WTC11 (cell line): ENCODE measurements at regions of chr9 and their contacts with region 1.

Region 1: DNA sequence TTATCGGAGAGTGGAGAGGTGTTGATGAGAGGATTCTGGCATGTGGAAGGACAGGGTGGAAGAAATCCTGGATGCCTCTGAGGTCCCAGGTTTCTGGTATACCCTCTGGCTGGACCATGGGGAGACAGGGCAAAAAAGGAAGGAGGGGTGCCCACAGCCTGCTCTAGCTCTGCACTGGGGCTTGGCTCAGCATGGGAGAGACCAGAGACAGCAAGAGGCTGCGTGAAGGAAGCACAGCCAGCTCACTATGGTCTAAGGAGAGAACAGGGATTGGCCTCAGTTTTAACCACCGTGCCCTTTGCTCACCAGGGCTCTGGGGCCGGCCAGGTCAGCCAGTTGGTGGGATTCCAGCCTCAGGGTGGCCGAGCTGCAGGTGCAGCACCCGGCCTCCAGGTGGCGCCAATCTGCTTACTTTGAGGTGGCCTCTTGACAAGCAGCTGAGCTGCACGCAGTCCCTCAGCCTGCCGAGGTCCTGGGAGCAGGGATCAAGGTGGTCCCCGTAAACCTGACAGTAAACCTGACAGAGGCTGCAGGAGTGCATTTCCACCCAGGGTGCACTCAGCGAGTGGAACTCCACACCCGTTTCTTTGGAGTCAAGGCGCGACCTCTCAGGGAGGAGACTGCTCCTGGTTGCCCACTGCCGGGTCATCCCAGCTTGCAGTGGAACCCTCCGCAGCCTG is 25.0 kb upstream of the SPTLC1 start:
- DNase-seq: peak; percentile 95
- ATAC-seq: peak; percentile 60
- H3K4me3 Mint-ChIP-seq: peak overlapping the region; percentile 74; the same call in 1 of the 2 replicates
- H3K27ac Mint-ChIP-seq: no peak overlapping the region
- H3K4me1 Mint-ChIP-seq: peaks cover 5% of the 10 kb centered on the region; the same call in 1 of the 2 replicates
- H3K27me3 Mint-ChIP-seq: peaks cover 36% of the 10 kb centered on the region
- CTCF ChIP-seq: peak; percentile 98

Region 2: DNA sequence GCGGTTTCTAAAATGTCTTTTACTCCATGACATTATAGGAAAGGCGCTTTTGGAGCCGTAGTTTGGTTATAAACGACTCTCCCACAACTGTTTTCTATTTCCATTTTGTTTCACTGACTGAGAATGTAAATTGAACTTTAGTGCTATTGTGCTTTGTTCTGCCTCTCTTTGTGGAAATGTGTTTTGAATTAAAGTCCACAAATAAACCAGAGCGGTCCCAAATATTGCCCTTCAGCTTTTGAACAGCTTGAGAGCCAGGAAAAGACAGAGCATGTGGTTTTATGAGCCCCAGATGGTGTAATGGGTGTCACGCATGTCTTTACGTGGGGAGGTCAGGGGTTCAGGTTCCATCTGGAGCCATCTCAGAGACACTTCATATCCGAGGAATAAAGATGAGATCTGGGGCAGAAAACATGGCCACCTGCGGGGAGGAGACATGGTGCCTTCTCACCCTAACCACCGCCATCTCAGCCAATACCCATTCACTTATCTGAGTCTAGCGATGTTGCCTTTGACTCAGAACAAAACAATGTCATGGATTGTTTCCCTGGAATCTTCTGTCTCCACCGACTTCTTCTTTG is 147.7 kb before region 1 on chr9:
- CTCF ChIA-PET with region 1: no interaction called
- POLR2A ChIA-PET with region 1: no interaction called
- DNase-seq: no peak
- ATAC-seq: no peak
- H3K4me3 Mint-ChIP-seq: no peak overlapping the region
- H3K27ac Mint-ChIP-seq: no peak overlapping the region
- H3K4me1 Mint-ChIP-seq: no peaks in the 10 kb centered on the region
- H3K27me3 Mint-ChIP-seq: peaks cover 4% of the 10 kb centered on the region; the same call in 1 of the 2 replicates
- CTCF ChIP-seq: no peak

Region 3: GRCh38 chr9:92044936-92045335 is 95.3 kb before region 1 on chr9:
- CTCF ChIA-PET with region 1: no interaction called
- POLR2A ChIA-PET with region 1: no interaction called
- DNase-seq: no peak
- ATAC-seq: no peak
- H3K4me3 Mint-ChIP-seq: no peak overlapping the region
- H3K27ac Mint-ChIP-seq: no peak overlapping the region
- H3K4me1 Mint-ChIP-seq: peaks cover 23% of the 10 kb centered on the region
- H3K27me3 Mint-ChIP-seq: no peaks in the 10 kb centered on the region
- CTCF ChIP-seq: no peak

Region 4: DNA sequence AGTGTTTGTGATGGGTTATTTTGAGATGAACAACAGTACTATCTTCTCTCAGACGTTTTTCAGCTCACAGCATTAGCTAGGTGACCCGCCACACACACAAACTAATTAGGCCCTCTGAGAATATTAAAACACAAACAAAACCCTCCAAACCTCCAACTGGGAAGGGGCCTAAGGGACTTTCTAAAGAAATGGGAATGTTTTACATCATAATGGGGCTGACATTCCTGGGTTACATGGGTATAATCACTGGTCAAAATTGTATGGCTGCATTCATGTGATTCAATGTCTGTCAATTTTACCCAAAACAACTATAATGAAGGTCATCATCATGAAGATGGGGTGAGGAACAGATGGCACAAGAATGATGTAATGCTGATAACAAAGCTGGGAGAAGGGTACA is 84.6 kb before region 1 on chr9:
- CTCF ChIA-PET with region 1: no interaction called
- POLR2A ChIA-PET with region 1: no interaction called
- DNase-seq: no peak
- ATAC-seq: peak; percentile 81
- H3K4me3 Mint-ChIP-seq: peak overlapping the region; percentile 30
- H3K27ac Mint-ChIP-seq: peak overlapping the region; percentile 96
- H3K4me1 Mint-ChIP-seq: peaks cover 69% of the 10 kb centered on the region
- H3K27me3 Mint-ChIP-seq: no peaks in the 10 kb centered on the region
- CTCF ChIP-seq: no peak

Region 5: GRCh38 chr9:92180669-92181181 is 40.5 kb after region 1 on chr9:
- CTCF ChIA-PET with region 1: interaction called, 67 read pairs
- POLR2A ChIA-PET with region 1: no interaction called
- DNase-seq: no peak
- ATAC-seq: no peak
- H3K4me3 Mint-ChIP-seq: no peak overlapping the region
- H3K27ac Mint-ChIP-seq: no peak overlapping the region; the same call in 1 of the 2 replicates
- H3K4me1 Mint-ChIP-seq: no peaks in the 10 kb centered on the region
- H3K27me3 Mint-ChIP-seq: no peaks in the 10 kb centered on the region
- CTCF ChIP-seq: no peak

Region 6: DNA sequence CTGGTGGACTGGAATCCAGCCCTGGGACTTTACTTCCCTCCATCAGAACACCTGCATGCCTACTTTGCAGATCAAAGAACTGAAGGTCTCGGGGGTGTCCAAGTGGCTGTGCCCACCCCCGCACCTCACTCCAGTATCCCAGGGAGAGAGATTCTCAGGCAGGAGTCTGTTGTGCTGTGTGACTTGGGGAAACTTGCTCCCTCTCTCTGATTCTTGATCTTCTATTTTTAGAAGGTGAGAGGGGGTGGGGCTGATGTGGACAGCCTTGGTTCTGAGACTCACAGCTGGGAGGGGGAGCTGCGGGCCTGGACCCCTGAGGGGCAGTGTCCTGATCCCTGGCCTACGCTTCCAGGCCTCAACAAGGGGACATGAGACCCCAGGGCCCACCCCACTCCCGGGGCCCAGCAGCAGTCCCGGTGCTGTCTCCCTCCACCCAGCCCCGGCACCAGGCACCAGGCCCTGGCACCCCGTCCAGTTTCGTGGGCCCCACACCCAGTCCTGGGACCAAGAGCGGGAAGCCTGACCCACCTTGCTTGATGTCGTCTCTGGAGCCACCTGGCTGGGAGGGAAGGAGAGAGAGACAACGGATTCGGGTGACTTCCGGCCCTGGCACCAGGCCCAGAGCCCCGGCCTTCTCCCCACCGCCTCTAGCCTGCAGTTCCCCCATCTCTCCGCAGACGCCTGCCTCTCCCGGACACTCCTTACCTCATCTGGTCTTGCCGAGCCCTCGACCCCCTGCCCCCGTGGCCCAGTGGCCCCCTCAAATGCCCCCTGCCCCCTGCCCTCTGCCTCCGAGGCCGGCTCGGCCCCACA is 49.0 kb after region 1 on chr9:
- CTCF ChIA-PET with region 1: interaction called, 11 read pairs
- POLR2A ChIA-PET with region 1: no interaction called
- DNase-seq: no peak
- ATAC-seq: peak; percentile 48
- H3K4me3 Mint-ChIP-seq: no peak overlapping the region
- H3K27ac Mint-ChIP-seq: no peak overlapping the region
- H3K4me1 Mint-ChIP-seq: 0 out of 2 replicates have a peak, but pooled peaks cover 2% of the 10 kb centered on the region
- H3K27me3 Mint-ChIP-seq: no peaks in the 10 kb centered on the region
- CTCF ChIP-seq: no peak

Region 7: GRCh38 chr9:92206488-92206887 is 66.3 kb after region 1 on chr9:
- CTCF ChIA-PET with region 1: interaction called, 42 read pairs
- POLR2A ChIA-PET with region 1: interaction called, 5 read pairs
- DNase-seq: no peak
- ATAC-seq: no peak; the same call in 1 of the 2 replicates
- H3K4me3 Mint-ChIP-seq: no peak overlapping the region
- H3K27ac Mint-ChIP-seq: 0 out of 2 replicates have a peak overlapping the region, but pooled peaks have one; percentile 4
- H3K4me1 Mint-ChIP-seq: no peaks in the 10 kb centered on the region
- H3K27me3 Mint-ChIP-seq: no peaks in the 10 kb centered on the region; the same call in 1 of the 2 replicates
- CTCF ChIP-seq: no peak

Region 8: DNA sequence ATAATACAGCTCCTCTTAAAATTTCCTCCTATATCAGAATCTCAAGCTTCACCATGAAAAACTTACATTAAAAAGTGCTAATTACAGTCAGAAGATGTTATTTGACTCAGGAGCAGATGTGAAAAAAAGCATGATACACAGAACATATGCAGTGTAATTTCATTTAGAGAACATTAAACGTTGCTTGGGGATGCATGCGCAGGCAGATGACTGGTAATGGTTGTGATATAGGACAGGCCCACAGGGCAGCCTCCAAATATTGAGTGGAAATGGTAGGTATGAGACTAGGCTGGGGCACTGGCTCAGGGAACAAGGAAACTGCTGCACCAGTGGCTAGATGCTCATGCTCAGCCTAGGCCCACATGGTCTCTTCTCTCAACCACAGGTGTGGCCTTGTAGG is 83.5 kb after region 1 on chr9:
- CTCF ChIA-PET with region 1: interaction called, 13 read pairs
- POLR2A ChIA-PET with region 1: no interaction called
- DNase-seq: no peak
- ATAC-seq: no peak
- H3K4me3 Mint-ChIP-seq: no peak overlapping the region
- H3K27ac Mint-ChIP-seq: no peak overlapping the region
- H3K4me1 Mint-ChIP-seq: no peaks in the 10 kb centered on the region
- H3K27me3 Mint-ChIP-seq: no peaks in the 10 kb centered on the region
- CTCF ChIP-seq: no peak

Region 9: GRCh38 chr9:92234514-92234913 is 94.3 kb after region 1 on chr9:
- CTCF ChIA-PET with region 1: interaction called, 93 read pairs
- POLR2A ChIA-PET with region 1: no interaction called
- DNase-seq: no peak
- ATAC-seq: no peak
- H3K4me3 Mint-ChIP-seq: no peak overlapping the region
- H3K27ac Mint-ChIP-seq: no peak overlapping the region
- H3K4me1 Mint-ChIP-seq: no peaks in the 10 kb centered on the region
- H3K27me3 Mint-ChIP-seq: no peaks in the 10 kb centered on the region
- CTCF ChIP-seq: no peak

Region 10: GRCh38 chr9:92242260-92243136 is 102.3 kb after region 1 on chr9:
- CTCF ChIA-PET with region 1: interaction called, 93 read pairs
- POLR2A ChIA-PET with region 1: interaction called, 4 read pairs
- DNase-seq: no peak
- ATAC-seq: peak; percentile 64
- H3K4me3 Mint-ChIP-seq: no peak overlapping the region
- H3K27ac Mint-ChIP-seq: no peak overlapping the region
- H3K4me1 Mint-ChIP-seq: no peaks in the 10 kb centered on the region
- H3K27me3 Mint-ChIP-seq: no peaks in the 10 kb centered on the region
- CTCF ChIP-seq: no peak